Gastrocnemius medialis (tissue), 4 donors: ENCODE measurements at regions of chr11 and their contacts with region 1.

Region 1: GRCh38 chr11:94705896-94706615 is 62.1 kb upstream of the AMOTL1 start:
- DNase-seq: peak; percentile 53 to 71
- ATAC-seq: peak; percentile 87 to 92
- H3K4me3 ChIP-seq: peak overlapping the region; percentile 23 to 51 (median 48)
- H3K27ac ChIP-seq: peak overlapping the region; percentile 84 to 91 (median 88)
- H3K4me1 ChIP-seq: peaks cover 28 to 30% of the 10 kb centered on the region in 2 donors
- H3K27me3 ChIP-seq: no peaks in the 10 kb centered on the region
- CTCF ChIP-seq: no peak
- POLR2A ChIP-seq: no peak

Region 2: GRCh38 chr11:94762208-94762607 is 56.2 kb after region 1 on chr11:
- in situ Hi-C with region 1: no loop called
- intact Hi-C with region 1: loop called (anchors 5 kb)
- DNase-seq: peak in 1 of 2 donors; percentile 51
- ATAC-seq: peak; percentile 45 to 74
- H3K4me3 ChIP-seq: no peak overlapping the region
- H3K27ac ChIP-seq: peak overlapping the region; percentile 85 to 98 (median 87)
- H3K4me1 ChIP-seq: peaks cover 34 to 35% of the 10 kb centered on the region in 2 donors
- H3K27me3 ChIP-seq: no peaks in the 10 kb centered on the region
- CTCF ChIP-seq: peak; percentile 34 to 53 (median 48)
- POLR2A ChIP-seq: no peak